IMR-90 (cell line): ENCODE measurements at regions of chr19 and their contacts with region 1.

Region 1: GRCh38 chr19:52962394-52963246 is at the start of gene ZNF816:
- DNase-seq: peak; percentile 88
- ATAC-seq: peak; percentile 98
- H3K4me3 ChIP-seq: peak within 1 kb of the TSS; percentile 62
- H3K27ac ChIP-seq: peak within 1 kb of the TSS; percentile 69
- H3K4me1 ChIP-seq: 0 out of 2 replicates have a peak, but pooled peaks cover 2% of the 10 kb centered on the region
- H3K27me3 ChIP-seq: no peaks in the 10 kb centered on the region
- CTCF ChIP-seq: no peak
- POLR2A ChIP-seq: peak; percentile 43; the same call in 1 of the 2 replicates
- RAD21 ChIP-seq: no peak
- total RNA-seq, gene ZNF816: 10.0 and 12.0 TPM in 2 replicates

Region 2: DNA sequence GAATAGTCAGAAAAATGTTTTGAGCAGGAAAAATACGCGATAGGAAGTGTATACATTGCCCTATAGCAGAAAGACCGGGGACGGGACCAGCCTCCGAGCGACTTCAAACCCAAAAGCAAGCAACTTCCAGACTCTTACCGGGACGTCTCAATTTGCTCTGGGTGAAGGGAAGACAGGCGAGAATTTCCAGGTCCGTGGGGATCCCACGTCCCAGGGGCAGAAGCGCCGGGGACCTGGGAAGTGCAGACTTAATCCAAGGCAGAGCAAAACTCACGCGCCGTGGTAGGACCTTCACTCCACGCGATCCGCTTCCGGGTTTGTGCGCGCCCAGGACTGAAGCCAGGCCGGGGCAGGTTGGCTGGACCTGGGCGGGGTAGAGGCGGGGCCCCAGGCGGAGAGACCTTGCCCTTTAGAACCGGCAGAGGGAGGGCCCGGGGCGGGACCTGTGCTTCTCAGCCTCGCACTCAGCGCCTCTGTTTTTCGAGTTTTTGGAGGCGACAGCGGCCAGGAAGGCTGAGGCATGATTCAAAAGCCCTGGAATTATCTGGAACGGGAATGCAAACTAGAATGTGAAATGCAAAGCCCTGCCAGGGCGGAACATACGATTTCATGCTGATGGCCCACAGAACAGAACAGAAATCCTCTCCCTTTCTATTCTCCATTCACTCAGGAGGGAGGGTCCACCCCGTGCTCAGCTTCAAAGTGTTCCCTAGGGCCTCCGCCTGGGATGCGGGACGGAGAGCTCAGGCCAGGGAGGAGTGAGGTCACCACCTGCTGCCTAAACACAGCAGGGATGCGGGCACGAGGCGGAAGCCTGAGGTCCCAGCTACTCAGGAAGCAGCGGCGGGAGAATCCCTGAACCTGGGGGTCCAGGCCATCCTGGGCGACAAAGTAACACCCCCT is 175.9 kb before region 1 on chr19 and contains the start of gene ZNF600:
- CTCF ChIA-PET with region 1: no interaction called
- POLR2A ChIA-PET with region 1: no interaction called
- dilution Hi-C with region 1: no loop called
- in situ Hi-C with region 1: no loop called
- intact Hi-C with region 1: loop called (anchors 5 kb)
- DNase-seq: peak; percentile 48
- ATAC-seq: peak; percentile 99
- H3K4me3 ChIP-seq: peak within 1 kb of the TSS; percentile 86
- H3K27ac ChIP-seq: 0 out of 2 replicates have a peak within 1 kb of the TSS, but pooled peaks have one; percentile 32
- H3K4me1 ChIP-seq: 0 out of 2 replicates have a peak, but pooled peaks cover 1% of the 10 kb centered on the region
- H3K27me3 ChIP-seq: no peaks in the 10 kb centered on the region
- CTCF ChIP-seq: no peak
- POLR2A ChIP-seq: no peak
- RAD21 ChIP-seq: no peak
- total RNA-seq, gene ZNF600: 3.9 and 4.1 TPM in 2 replicates

Region 3: DNA sequence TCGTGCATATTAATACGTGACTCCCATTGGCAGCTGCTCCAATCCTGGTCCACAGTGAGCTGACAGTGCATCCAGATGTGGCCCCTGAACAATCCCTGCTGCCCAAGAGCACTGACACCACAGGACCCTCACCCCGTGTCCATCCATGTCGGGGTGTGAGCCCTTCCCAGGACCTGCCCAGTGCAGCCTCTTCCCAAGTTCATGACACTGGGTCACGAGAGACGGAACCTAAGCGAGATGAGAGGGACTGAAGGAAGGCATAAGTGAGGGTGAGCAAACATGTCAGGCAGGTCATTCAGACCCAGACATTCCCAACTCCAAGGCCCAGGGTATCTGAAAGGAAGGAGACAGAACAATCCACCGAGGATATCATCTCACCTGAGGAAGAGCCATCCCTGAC is 108.7 kb before region 1 on chr19:
- CTCF ChIA-PET with region 1: no interaction called
- POLR2A ChIA-PET with region 1: no interaction called
- dilution Hi-C with region 1: no loop called
- in situ Hi-C with region 1: no loop called
- intact Hi-C with region 1: loop called (anchors 1 kb)
- DNase-seq: no peak
- ATAC-seq: no peak
- H3K4me3 ChIP-seq: no peak overlapping the region
- H3K27ac ChIP-seq: no peak overlapping the region
- H3K4me1 ChIP-seq: peaks cover 3% of the 10 kb centered on the region
- H3K27me3 ChIP-seq: no peaks in the 10 kb centered on the region
- CTCF ChIP-seq: no peak
- POLR2A ChIP-seq: no peak
- RAD21 ChIP-seq: no peak

Region 4: DNA sequence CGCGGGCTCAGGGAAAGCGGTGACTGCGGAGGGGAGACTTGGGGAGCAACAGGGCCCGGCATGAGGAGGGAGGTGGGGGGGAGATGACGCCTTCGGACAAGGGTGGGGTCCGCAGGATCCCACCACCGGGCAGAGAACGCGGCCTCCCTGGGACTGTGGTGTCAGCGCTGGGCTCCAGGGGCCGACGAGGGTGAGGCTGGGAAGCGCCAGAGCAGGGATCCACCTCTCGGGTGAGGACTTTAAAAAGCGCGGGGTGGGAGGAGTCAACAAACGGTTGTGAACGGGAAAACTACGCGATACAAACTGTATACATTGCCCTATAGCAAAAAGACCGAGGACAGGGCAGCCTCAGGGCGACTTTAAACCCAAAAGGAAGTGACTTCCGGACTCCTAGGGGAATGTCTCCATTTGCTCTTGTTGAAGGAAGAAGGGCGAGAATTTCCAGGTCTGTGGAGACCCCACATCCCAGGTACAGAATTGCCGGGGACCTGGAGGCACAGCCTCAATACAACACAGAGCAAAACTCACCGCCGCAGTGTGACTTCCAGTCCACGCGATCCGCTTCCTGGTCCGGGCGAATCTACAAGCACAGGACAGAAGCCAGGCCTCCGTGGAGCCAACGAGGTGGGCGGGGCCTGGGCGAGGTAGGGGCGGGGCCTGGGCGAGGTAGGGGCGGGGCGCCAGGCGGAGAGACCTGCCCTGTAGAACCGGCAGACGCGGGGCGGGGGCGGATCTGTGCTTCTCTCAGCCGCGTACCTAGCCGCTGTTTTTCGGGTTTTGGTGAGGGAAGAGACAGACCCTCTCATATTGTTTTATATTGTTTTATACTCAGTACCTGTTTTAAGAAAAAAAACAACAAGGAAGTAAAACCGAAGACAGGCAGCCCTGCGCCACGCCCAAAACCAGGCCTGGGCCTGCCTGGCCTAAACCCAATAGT is 39.5 kb before region 1 on chr19 and contains the start of gene ZNF888:
- CTCF ChIA-PET with region 1: no interaction called
- POLR2A ChIA-PET with region 1: no interaction called
- dilution Hi-C with region 1: no loop called
- in situ Hi-C with region 1: no loop called
- intact Hi-C with region 1: loop called (anchors 2 kb)
- DNase-seq: peak; percentile 70
- ATAC-seq: peak; percentile 99
- H3K4me3 ChIP-seq: peak within 1 kb of the TSS; percentile 78
- H3K27ac ChIP-seq: peak within 1 kb of the TSS; percentile 90
- H3K4me1 ChIP-seq: no peaks in the 10 kb centered on the region
- H3K27me3 ChIP-seq: no peaks in the 10 kb centered on the region
- CTCF ChIP-seq: no peak
- POLR2A ChIP-seq: peak; percentile 65; the same call in 1 of the 2 replicates
- RAD21 ChIP-seq: no peak
- total RNA-seq, gene ZNF888: 6.1 TPM in 2 replicates

Region 5: GRCh38 chr19:53183146-53183764 is 220.6 kb after region 1 on chr19:
- CTCF ChIA-PET with region 1: no interaction called
- POLR2A ChIA-PET with region 1: no interaction called
- dilution Hi-C with region 1: no loop called
- in situ Hi-C with region 1: no loop called
- intact Hi-C with region 1: loop called (anchors 10 kb)
- DNase-seq: peak; percentile 66
- ATAC-seq: peak; percentile 97
- H3K4me3 ChIP-seq: no peak overlapping the region
- H3K27ac ChIP-seq: peak overlapping the region; percentile 63
- H3K4me1 ChIP-seq: peaks cover 10% of the 10 kb centered on the region
- H3K27me3 ChIP-seq: no peaks in the 10 kb centered on the region
- CTCF ChIP-seq: no peak
- POLR2A ChIP-seq: no peak
- RAD21 ChIP-seq: no peak

Region 6: GRCh38 chr19:53365134-53365898 is 402.7 kb after region 1 on chr19 and contains the start of gene ZNF525:
- CTCF ChIA-PET with region 1: no interaction called
- POLR2A ChIA-PET with region 1: no interaction called
- dilution Hi-C with region 1: no loop called
- in situ Hi-C with region 1: no loop called
- intact Hi-C with region 1: no loop called
- DNase-seq: peak; percentile 59
- ATAC-seq: peak; percentile 98
- H3K4me3 ChIP-seq: peak within 1 kb of the TSS; percentile 55
- H3K27ac ChIP-seq: peak within 1 kb of the TSS; percentile 24; the same call in 1 of the 2 replicates
- H3K4me1 ChIP-seq: no peaks in the 10 kb centered on the region
- H3K27me3 ChIP-seq: no peaks in the 10 kb centered on the region
- CTCF ChIP-seq: 0 out of 2 replicates have a peak, but pooled peaks have one; percentile 17
- POLR2A ChIP-seq: peak; percentile 49
- RAD21 ChIP-seq: peak; percentile 23
- total RNA-seq, gene ZNF525: 4.5 and 6.7 TPM in 2 replicates